ENCODE measurements at regions of chr5 and their contacts with region 1.

Region 1: GRCh38 chr5:179495906-179496455 is 54.4 kb upstream of the RUFY1 start:
- DNase-seq: no peak
- ATAC-seq: no peak
- H3K4me3 ChIP-seq: no peak overlapping the region
- H3K27ac ChIP-seq: no peak overlapping the region
- H3K4me1 ChIP-seq: peaks cover 0 to 6% of the 10 kb centered on the region in 2 experiments; a peak in 1 of 5 replicates
- H3K27me3 ChIP-seq: peaks cover 17 to 59% of the 10 kb centered on the region in 2 experiments
- CTCF ChIP-seq: 0 out of 6 replicates have a peak, but pooled peaks of 1 of the 3 experiments have one; percentile 7
- EP300 ChIP-seq: no peak
- POLR2A ChIP-seq: no peak
- RAD21 ChIP-seq: no peak

Region 2: GRCh38 chr5:178293400-178293799 is 1202.6 kb before region 1 on chr5:
- CTCF ChIA-PET with region 1: no interaction called
- POLR2A ChIA-PET with region 1: no interaction called
- in situ Hi-C with region 1: loop called (anchors 10 kb)
- intact Hi-C with region 1: no loop called
- DNase-seq: no peak
- ATAC-seq: no peak
- H3K4me3 ChIP-seq: no peak overlapping the region
- H3K27ac ChIP-seq: no peak overlapping the region
- H3K4me1 ChIP-seq: 0 out of 5 replicates have a peak, but pooled peaks cover 0 to 3% of the 10 kb centered on the region in 2 experiments
- H3K27me3 ChIP-seq: peaks cover 19 to 70% of the 10 kb centered on the region in 2 experiments; a peak in 3 of 5 replicates
- CTCF ChIP-seq: no peak
- EP300 ChIP-seq: no peak
- POLR2A ChIP-seq: no peak
- RAD21 ChIP-seq: no peak

Region 3: GRCh38 chr5:179166886-179167841 is 328.8 kb before region 1 on chr5:
- CTCF ChIA-PET with region 1: interaction called, 12 read pairs
- POLR2A ChIA-PET with region 1: no interaction called
- in situ Hi-C with region 1: loop called (anchors 5 kb)
- intact Hi-C with region 1: loop called (anchors 1 kb)
- DNase-seq: peak; percentile 53 to 95 (median 90)
- ATAC-seq: peak; percentile 96
- H3K4me3 ChIP-seq: no peak overlapping the region
- H3K27ac ChIP-seq: no peak overlapping the region
- H3K4me1 ChIP-seq: peaks cover 0 to 14% of the 10 kb centered on the region in 2 experiments; a peak in 2 of 5 replicates
- H3K27me3 ChIP-seq: peaks cover 0 to 56% of the 10 kb centered on the region in 2 experiments; a peak in 2 of 5 replicates
- CTCF ChIP-seq: peak; percentile 74 to 85 (median 77)
- EP300 ChIP-seq: no peak
- POLR2A ChIP-seq: no peak
- RAD21 ChIP-seq: peak; percentile 74 to 83

Region 4: DNA sequence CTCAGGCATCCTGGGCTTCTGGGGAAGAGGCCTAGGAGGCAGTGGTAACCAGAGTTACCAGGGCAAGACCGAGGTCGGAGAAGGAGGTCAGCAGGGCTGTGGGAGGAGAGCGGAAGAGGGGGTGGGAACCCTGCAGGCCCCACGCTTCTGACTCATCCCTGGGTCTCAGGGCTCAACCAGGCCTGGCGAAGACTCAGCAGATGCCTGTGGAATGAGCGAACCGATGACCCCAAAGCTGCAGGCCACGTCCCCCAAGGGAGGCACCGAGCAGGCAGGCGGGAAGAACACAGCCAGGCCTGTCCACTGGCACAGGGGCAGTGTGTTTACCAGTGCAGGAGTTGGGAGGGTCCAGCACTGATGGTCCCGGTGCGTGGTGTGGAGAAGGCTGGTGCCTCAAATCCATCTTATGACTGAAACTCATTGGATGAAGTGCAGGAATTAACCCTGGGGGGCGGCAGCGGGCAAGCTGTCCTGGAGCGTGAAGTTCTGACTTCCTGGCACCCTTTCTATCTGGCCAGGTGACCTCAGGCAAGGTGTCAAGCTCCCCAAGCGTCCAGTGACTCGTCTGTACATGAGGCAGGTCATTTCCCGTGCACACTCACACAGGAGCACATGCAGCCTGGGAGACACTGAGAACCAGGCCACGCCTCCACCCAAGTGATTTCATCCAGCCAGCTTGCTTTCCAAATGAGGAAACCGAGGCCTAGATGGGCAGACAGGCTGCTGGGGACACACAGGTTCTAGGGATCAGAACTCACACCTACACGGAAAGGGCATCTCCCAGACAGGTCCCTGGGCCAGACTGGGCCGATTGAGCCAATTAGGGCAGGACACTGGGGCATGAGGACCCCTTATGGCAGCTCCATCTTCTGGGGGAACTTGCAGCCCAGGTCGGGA is 219.8 kb before region 1 on chr5:
- CTCF ChIA-PET with region 1: no interaction called
- POLR2A ChIA-PET with region 1: no interaction called
- in situ Hi-C with region 1: no loop called
- intact Hi-C with region 1: loop called (anchors 2 kb)
- DNase-seq: peak; percentile 39 to 53 (median 47)
- ATAC-seq: peak; percentile 66
- H3K4me3 ChIP-seq: no peak overlapping the region
- H3K27ac ChIP-seq: no peak overlapping the region
- H3K4me1 ChIP-seq: peaks cover 4 to 12% of the 10 kb centered on the region in 2 experiments; a peak in 2 of 5 replicates
- H3K27me3 ChIP-seq: peaks cover 0 to 14% of the 10 kb centered on the region in 2 experiments; a peak in 2 of 5 replicates
- CTCF ChIP-seq: no peak
- EP300 ChIP-seq: no peak
- POLR2A ChIP-seq: no peak
- RAD21 ChIP-seq: no peak